Esophagus squamous epithelium (tissue), 5 donors: ENCODE measurements at regions of chr15 and their contacts with region 1.

Region 1: GRCh38 chr15:67521029-67521811 is at the start of gene C15orf61:
- DNase-seq: peak; percentile 13
- H3K4me3 ChIP-seq: peak within 1 kb of the TSS; percentile 68 to 98 (median 88)
- H3K27ac ChIP-seq: peak within 1 kb of the TSS; percentile 92 to 98 (median 96)
- H3K4me1 ChIP-seq: peaks cover 6 to 44% (median 9%) of the 10 kb centered on the region in 3 donors
- H3K27me3 ChIP-seq: no peaks in the 10 kb centered on the region
- CTCF ChIP-seq: no peak
- POLR2A ChIP-seq: peak in 3 of 4 donors; percentile 5 to 86 (median 82)
- total RNA-seq, gene C15orf61: 2.0 to 9.0 (median 3.5) TPM

Region 2: DNA sequence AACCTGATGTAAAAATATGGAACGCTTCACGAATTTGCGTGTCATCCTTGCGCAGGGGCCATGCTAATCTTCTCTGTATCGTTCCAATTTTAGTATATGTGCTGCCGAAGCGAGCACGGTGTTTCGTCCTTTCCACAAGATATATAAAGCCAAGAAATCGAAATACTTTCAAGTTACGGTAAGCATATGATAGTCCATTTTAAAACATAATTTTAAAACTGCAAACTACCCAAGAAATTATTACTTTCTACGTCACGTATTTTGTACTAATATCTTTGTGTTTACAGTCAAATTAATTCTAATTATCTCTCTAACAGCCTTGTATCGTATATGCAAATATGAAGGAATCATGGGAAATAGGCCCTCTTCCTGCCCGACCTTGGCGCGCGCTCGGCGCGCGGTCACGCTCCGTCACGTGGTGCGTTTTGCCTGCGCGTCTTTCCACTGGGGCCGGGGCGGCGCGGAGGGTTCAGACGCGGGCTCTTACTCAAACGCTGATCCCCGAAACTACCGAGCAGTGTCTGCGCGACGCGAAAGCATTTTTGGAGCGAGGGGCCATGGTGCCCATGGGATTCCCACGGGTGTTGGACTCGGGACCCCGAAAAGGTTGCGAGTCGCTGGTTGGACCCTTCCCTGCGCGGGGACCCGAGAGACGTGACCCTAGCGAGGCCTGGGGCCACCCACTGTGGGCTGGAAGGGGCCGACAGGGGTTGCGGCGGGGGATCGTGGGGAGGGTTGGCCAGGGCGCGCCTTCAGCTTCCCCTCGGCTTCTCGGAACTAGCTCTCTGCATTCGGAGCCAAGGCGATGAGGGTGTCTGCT is 318.9 kb after region 1 on chr15 and contains the start of gene RNU6-1:
- intact Hi-C with region 1: loop called (anchors 5 kb)
- DNase-seq: peak; percentile 71
- H3K4me3 ChIP-seq: peak within 1 kb of the TSS; percentile 71 to 93 (median 87)
- H3K27ac ChIP-seq: peak within 1 kb of the TSS; percentile 92 to 98 (median 96)
- H3K4me1 ChIP-seq: peaks cover 17 to 46% (median 27%) of the 10 kb centered on the region in 3 donors
- H3K27me3 ChIP-seq: peaks cover 0 to 17% (median 9%) of the 10 kb centered on the region in 4 donors
- CTCF ChIP-seq: peak in 1 of 6 experiments; percentile 21
- POLR2A ChIP-seq: peak in 3 of 4 donors; percentile 20 to 86 (median 80)
- total RNA-seq, gene RNU6-1: not detected